Tibial artery (tissue), 4 donors: ENCODE measurements at regions of chr17 and their contacts with region 1.

Region 1: GRCh38 chr17:7989781-7990655 is 12.4 kb upstream of the GUCY2D start:
- DNase-seq: peak; percentile 83 to 87
- H3K4me3 ChIP-seq: peak overlapping the region; percentile 39 to 63
- H3K27ac ChIP-seq: peak overlapping the region; percentile 5 to 24
- H3K4me1 ChIP-seq: peaks cover 0 to 10% (median 9%) of the 10 kb centered on the region in 4 donors
- H3K27me3 ChIP-seq: peaks cover 0 to 51% of the 10 kb centered on the region in 2 donors
- CTCF ChIP-seq: peak; percentile 92 to 97

Region 2: DNA sequence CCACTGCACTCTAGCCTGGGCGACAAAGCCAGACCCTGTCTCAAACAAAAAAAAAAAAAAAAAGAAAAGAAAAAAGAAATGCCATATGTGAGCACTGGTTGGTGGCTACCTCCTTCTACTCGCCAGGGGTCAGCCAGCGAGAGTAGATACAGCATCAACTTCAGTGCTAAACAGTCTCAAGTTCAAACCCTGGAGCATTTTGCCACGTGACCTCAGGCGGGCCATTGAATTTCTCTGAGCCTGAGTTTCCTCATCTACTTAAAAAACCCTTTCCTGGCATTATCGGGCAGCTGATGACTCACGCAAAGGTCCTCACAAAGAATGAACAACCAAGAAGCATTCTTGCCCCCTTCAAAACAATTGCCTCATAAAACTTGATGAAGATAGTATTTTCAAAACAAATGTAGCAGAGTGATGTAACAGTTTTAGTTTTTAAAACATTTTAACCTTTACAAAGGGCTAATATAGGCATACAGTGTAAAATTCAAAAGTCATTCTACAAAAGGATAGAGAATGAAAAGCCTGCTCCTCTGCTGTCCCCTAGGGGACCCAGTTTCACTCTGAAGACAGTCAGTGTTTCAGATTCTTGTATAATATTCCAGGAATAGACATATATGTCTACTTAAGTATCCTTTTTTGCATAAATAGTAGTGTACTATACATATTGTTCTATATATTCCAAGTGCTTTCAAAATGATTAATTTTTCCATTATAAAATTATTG is 244.1 kb before region 1 on chr17:
- intact Hi-C with region 1: loop called (anchors 10 kb)
- DNase-seq: peak in 1 of 2 donors; percentile 36
- H3K4me3 ChIP-seq: no peak overlapping the region
- H3K27ac ChIP-seq: no peak overlapping the region
- H3K4me1 ChIP-seq: no peaks in the 10 kb centered on the region
- H3K27me3 ChIP-seq: peaks cover 0 to 47% of the 10 kb centered on the region in 2 donors
- CTCF ChIP-seq: no peak

Region 3: DNA sequence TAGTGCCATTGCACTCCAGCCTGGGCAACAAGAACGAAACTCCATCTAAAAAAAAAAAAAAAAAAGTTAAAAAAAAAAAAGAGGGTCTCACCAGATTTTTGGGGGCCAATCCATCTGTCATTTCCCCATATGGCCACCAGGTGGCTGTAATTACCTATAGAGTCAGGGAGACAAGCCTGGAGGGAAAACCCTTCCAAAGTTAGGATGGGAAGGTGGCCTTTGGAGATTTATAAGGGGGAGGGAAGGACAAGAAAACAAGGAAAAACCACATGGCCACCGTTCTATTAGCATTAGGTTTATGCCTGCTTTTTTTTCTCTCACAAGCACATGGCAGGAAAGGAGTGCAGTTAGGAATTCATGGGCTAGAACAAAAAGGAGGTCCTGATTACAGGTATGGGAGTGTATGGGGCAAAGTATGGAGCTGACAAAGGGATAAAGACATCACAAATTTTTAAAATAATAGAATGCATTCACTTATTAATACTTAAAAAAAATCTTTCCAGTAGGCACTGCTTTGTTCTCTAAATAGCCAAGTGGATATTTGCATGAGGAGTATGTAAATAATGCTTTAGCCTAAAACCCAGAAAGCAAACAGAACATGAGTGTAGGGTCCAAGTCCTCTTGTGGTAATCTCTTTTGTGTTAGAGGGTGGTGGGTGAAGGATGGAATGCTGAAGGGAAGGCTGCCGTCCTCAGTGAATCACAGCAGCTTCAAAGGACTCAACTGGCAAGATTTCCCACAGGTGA is 127.2 kb before region 1 on chr17:
- intact Hi-C with region 1: loop called (anchors 5 kb)
- DNase-seq: no peak
- H3K4me3 ChIP-seq: no peak overlapping the region
- H3K27ac ChIP-seq: no peak overlapping the region
- H3K4me1 ChIP-seq: peaks cover 0 to 16% (median 12%) of the 10 kb centered on the region in 4 donors
- H3K27me3 ChIP-seq: no peaks in the 10 kb centered on the region
- CTCF ChIP-seq: peak; percentile 69 to 86

Region 4: GRCh38 chr17:7912927-7913524 is 77.0 kb before region 1 on chr17:
- intact Hi-C with region 1: loop called (anchors 2 kb)
- DNase-seq: no peak
- H3K4me3 ChIP-seq: no peak overlapping the region
- H3K27ac ChIP-seq: no peak overlapping the region
- H3K4me1 ChIP-seq: peaks cover 0 to 22% (median 14%) of the 10 kb centered on the region in 4 donors
- H3K27me3 ChIP-seq: no peaks in the 10 kb centered on the region
- CTCF ChIP-seq: peak; percentile 65 to 70

Region 5: DNA sequence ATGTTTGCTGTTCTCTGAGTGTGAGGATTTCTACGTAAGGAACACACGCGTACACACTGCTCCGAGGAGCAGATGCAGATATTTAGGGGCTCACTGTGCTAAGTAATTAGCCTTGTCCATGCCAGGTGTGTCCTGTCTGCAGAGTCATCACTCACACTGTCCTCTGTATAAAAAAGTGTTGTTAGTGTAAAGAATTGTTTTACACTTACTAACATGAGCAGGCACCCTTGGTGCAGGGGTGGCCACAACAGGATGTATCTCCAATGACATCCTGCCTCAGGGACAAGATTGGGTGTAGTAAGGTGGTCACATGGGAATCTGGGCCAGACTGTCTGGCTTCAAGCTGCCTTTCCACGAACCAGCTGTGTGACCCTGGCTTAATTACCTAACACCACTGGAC is 509.6 kb after region 1 on chr17:
- intact Hi-C with region 1: no loop called
- DNase-seq: no peak
- H3K4me3 ChIP-seq: no peak overlapping the region
- H3K27ac ChIP-seq: no peak overlapping the region
- H3K4me1 ChIP-seq: peaks cover 0 to 19% (median 6%) of the 10 kb centered on the region in 4 donors
- H3K27me3 ChIP-seq: no peaks in the 10 kb centered on the region
- CTCF ChIP-seq: no peak